OCI-LY7 (cell line): ENCODE measurements at regions of chr11 and their contacts with region 1.

Region 1: GRCh38 chr11:43311791-43312607 is at the start of gene API5:
- DNase-seq: peak; percentile 96
- H3K4me3 ChIP-seq: peak within 1 kb of the TSS; percentile 85
- H3K27ac ChIP-seq: peak within 1 kb of the TSS; percentile 45
- H3K4me1 ChIP-seq: peaks cover 22% of the 10 kb centered on the region
- CTCF ChIP-seq: peak; percentile 82
- total RNA-seq, gene API5: 71.1 and 98.0 TPM in 2 replicates

Region 2: GRCh38 chr11:43327987-43328386 is 16.0 kb after region 1 on chr11:
- CTCF ChIA-PET with region 1: no interaction called
- POLR2A ChIA-PET with region 1: interaction called, 11 read pairs
- intact Hi-C with region 1: no loop called
- DNase-seq: no peak
- H3K4me3 ChIP-seq: no peak overlapping the region
- H3K27ac ChIP-seq: no peak overlapping the region
- H3K4me1 ChIP-seq: no peaks in the 10 kb centered on the region
- CTCF ChIP-seq: no peak

Region 3: GRCh38 chr11:43358801-43359421 is 46.9 kb after region 1 on chr11 and contains the start of gene TTC17:
- CTCF ChIA-PET with region 1: interaction called, 5 read pairs
- POLR2A ChIA-PET with region 1: interaction called, 32 read pairs
- intact Hi-C with region 1: loop called (anchors 1 kb)
- DNase-seq: peak; percentile 95
- H3K4me3 ChIP-seq: peak within 1 kb of the TSS; percentile 89
- H3K27ac ChIP-seq: peak within 1 kb of the TSS; percentile 75
- H3K4me1 ChIP-seq: peaks cover 22% of the 10 kb centered on the region
- CTCF ChIP-seq: no peak
- total RNA-seq, gene TTC17: 71.3 and 73.7 TPM in 2 replicates

Region 4: DNA sequence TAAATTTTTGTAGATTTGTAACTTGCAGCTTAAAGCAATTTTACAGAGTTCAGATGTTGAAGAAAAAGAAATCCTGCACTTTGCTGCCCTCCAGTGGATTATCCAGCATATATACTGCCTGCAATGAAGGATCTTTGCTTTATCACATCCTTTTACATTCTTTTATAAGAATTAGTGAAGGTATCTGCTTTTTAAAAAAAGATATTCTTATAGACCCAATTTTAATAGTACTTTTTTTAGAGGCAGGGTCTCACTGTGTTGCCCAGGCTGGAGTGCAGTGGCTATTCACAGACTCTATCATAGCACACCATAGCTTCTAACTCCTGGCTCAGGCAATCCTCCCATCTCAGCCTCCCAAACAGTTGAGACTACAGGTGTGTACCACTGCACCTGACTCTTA is 107.5 kb after region 1 on chr11:
- CTCF ChIA-PET with region 1: interaction called, 5 read pairs
- POLR2A ChIA-PET with region 1: interaction called, 3 read pairs
- intact Hi-C with region 1: loop called (anchors 5 kb)
- DNase-seq: peak; percentile 57
- H3K4me3 ChIP-seq: no peak overlapping the region
- H3K27ac ChIP-seq: no peak overlapping the region
- H3K4me1 ChIP-seq: no peaks in the 10 kb centered on the region
- CTCF ChIP-seq: peak; percentile 95

Region 5: GRCh38 chr11:43486141-43486540 is 174.1 kb after region 1 on chr11:
- CTCF ChIA-PET with region 1: no interaction called
- POLR2A ChIA-PET with region 1: no interaction called
- intact Hi-C with region 1: no loop called
- DNase-seq: no peak
- H3K4me3 ChIP-seq: no peak overlapping the region
- H3K27ac ChIP-seq: no peak overlapping the region
- H3K4me1 ChIP-seq: no peaks in the 10 kb centered on the region
- CTCF ChIP-seq: no peak